PC-3 (cell line): ENCODE measurements at regions of chr17 and their contacts with region 1.

Region 1: GRCh38 chr17:73092523-73093135 is at the start of gene SLC39A11:
- DNase-seq: peak; percentile 97
- ATAC-seq: peak; percentile 94
- H3K4me3 ChIP-seq: peak within 1 kb of the TSS; percentile 73
- H3K27ac ChIP-seq: no peak within 1 kb of the TSS
- H3K4me1 ChIP-seq: peaks cover 11% of the 10 kb centered on the region
- H3K27me3 ChIP-seq: no peaks in the 10 kb centered on the region
- CTCF ChIP-seq: no peak
- total RNA-seq, gene SLC39A11: 37.7 and 38.8 TPM in 2 replicates

Region 2: DNA sequence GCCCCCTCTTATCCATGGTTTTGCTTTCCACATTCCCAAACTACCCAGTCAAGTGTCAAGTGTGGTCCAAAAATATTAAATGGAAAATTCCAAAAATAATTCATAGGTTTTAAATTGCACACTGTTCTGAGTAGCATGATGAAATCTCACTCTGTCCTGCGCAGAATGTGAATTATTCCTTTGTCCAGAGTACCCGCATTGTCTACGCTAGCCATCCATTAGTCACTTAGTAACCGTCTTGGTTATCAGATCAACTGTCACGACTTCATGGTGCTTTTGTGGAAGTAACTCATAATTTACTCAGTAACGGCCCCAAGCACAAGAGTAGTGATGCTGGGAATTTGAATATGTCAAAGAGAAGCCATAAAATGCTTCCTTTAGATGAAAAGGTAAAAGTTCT is 95.1 kb before region 1 on chr17:
- CTCF ChIA-PET with region 1: no interaction called
- POLR2A ChIA-PET with region 1: no interaction called
- intact Hi-C with region 1: no loop called
- DNase-seq: peak; percentile 42
- ATAC-seq: no peak
- H3K4me3 ChIP-seq: no peak overlapping the region
- H3K27ac ChIP-seq: no peak overlapping the region
- H3K4me1 ChIP-seq: no peaks in the 10 kb centered on the region
- H3K27me3 ChIP-seq: no peaks in the 10 kb centered on the region
- CTCF ChIP-seq: no peak

Region 3: GRCh38 chr17:73058022-73058421 is 34.6 kb before region 1 on chr17:
- CTCF ChIA-PET with region 1: no interaction called
- POLR2A ChIA-PET with region 1: no interaction called
- intact Hi-C with region 1: loop called (anchors 5 kb)
- DNase-seq: peak; percentile 26
- ATAC-seq: no peak
- H3K4me3 ChIP-seq: no peak overlapping the region
- H3K27ac ChIP-seq: peak overlapping the region; percentile 72
- H3K4me1 ChIP-seq: peaks cover 35% of the 10 kb centered on the region
- H3K27me3 ChIP-seq: no peaks in the 10 kb centered on the region
- CTCF ChIP-seq: no peak

Region 4: DNA sequence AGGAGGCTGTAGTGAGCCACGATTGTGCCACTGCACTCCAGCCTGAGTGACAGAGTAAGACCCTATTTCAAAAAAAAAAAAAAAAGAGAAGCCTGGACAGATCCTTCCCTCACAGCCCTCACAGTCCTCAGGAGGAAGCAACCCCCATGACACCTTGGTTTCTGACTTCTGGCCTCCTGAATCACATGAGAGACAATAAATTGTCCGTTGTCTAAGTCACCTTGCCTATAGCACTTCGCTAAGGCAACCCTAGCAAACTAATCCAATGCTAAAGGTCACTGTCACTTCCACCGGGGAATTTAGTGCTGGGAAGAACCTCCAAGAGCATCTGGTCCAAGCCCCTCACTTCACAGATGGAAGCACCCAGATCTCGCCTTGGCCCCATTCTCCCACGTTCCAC is 18.8 kb after region 1 on chr17:
- CTCF ChIA-PET with region 1: no interaction called
- POLR2A ChIA-PET with region 1: no interaction called
- intact Hi-C with region 1: no loop called
- DNase-seq: no peak
- ATAC-seq: no peak
- H3K4me3 ChIP-seq: no peak overlapping the region
- H3K27ac ChIP-seq: no peak overlapping the region
- H3K4me1 ChIP-seq: no peaks in the 10 kb centered on the region
- H3K27me3 ChIP-seq: no peaks in the 10 kb centered on the region
- CTCF ChIP-seq: no peak

Region 5: DNA sequence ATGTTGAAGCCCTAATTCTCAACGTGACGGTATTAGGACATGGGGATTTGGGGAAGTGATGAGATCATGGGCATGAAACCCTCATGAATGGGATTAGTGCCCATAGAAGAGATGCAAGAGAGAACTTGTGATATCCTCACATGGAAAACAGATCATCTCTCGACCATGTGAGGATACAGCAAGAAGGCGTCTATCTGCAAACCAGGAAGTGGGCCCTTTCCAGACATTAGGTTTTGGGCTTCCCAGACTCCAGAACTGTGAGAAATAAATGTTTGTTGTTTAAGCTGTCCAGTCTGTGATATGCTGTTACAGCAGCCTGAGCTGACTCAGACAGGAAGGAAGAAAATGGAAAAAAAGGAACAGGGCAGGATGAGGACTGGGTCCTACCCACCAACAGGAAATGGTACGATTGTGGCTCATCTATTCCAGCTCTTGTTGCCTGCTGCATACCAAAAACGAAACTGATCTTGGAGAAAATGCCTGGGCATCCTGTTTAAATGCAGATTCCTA is 50.3 kb after region 1 on chr17:
- CTCF ChIA-PET with region 1: no interaction called
- POLR2A ChIA-PET with region 1: no interaction called
- intact Hi-C with region 1: no loop called
- DNase-seq: peak; percentile 55
- ATAC-seq: peak; percentile 68
- H3K4me3 ChIP-seq: no peak overlapping the region
- H3K27ac ChIP-seq: no peak overlapping the region
- H3K4me1 ChIP-seq: peaks cover 4% of the 10 kb centered on the region; the same call in 1 of the 2 replicates
- H3K27me3 ChIP-seq: no peaks in the 10 kb centered on the region
- CTCF ChIP-seq: no peak